Adrenal gland (tissue), 19 donors: ENCODE measurements at regions of chr9 and their contacts with region 1.

Region 1: DNA sequence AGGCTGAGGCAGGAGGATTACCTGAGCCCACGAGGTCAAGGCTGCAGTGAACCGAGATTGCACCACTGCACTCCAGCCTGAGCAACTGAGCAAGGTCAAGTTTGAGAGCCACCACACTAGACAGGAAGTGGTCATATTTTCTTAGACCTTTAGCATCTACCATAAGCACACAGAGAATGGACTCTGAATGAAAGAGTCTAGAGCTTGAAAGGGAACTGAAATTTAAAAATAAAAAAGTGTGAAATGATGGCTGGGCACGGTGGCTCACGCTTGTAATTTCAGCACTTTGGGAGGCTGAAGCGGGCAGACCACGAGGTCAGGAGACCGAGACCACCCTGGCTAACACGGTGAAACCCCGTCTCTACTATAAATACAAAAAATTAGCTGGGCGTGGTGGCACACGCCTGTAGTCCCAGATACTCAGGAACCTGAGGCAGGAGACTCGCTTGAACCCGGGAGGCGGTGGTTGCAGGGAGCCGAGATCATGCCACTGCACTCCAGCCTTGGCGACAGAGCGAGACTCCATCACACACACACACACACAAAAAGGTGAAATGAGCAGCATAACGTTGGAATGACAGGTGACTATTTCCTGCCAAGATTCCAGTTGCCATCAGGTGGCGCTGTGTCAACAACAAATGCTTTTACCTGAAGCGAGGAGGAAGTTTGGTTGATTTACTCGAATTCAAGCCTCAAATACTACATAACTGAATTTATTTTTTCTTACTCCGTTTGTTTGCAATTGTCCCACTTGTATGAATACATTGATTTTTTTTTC is 21.3 kb upstream of the AK3 start:
- DNase-seq: peak; percentile 63 to 94 (median 80)
- H3K4me3 ChIP-seq: peak overlapping the region in 1 of 4 donors; percentile 33
- H3K27ac ChIP-seq: peak overlapping the region in 1 of 5 donors; percentile 54
- H3K4me1 ChIP-seq: peaks cover 0 to 14% of the 10 kb centered on the region in 2 donors
- H3K27me3 ChIP-seq: no peaks in the 10 kb centered on the region
- CTCF ChIP-seq: peak; percentile 72 to 94 (median 82)
- POLR2A ChIP-seq: no peak

Region 2: GRCh38 chr9:4923580-4924544 is 161.6 kb after region 1 on chr9:
- intact Hi-C with region 1: loop called in 1 of 2 experiments (anchors 5 kb)
- DNase-seq: no peak
- H3K4me3 ChIP-seq: no peak overlapping the region
- H3K27ac ChIP-seq: no peak overlapping the region
- H3K4me1 ChIP-seq: no peaks in the 10 kb centered on the region
- H3K27me3 ChIP-seq: no peaks in the 10 kb centered on the region
- CTCF ChIP-seq: peak in 5 of 6 experiments; percentile 20 to 50 (median 39)
- POLR2A ChIP-seq: no peak

Region 3: DNA sequence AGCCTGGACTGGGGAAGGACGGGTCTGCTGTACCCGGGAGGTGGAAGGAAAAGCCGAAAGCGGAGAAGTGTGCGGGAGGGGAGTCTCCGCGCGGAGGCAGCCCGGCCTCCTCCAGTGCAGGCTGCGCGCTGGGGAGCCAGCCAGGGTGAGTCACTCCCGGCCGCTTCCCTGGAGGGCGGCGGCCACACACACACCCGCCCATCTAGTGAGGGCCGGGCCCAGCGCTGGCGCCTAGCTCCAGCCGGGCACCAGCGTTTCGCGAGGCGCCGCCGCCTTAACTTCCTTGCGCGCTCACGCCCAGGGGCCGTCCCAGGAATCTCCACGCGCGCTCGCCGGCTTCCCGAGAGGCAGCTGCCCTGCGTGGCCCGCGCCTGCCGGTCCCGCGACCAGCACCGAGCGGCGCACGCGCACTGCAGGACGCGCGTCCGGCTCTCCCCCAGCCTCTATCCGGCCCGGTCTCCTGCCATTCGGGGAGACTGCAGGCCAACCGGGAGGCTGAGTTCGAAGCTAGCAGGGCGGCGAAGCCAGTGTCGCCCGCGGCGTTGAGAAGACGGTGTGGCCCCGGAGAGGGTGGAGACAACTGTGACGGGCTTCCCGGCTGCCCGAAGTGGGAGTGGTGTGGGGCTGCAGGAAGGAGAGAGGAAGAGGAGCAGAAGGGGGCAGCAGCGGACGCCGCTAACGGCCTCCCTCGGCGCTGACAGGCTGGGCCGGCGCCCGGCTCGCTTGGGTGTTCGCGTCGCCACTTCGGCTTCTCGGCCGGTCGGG is 222.5 kb after region 1 on chr9 and contains the start of gene JAK2:
- intact Hi-C with region 1: loop called (anchors 5 to 10 kb)
- DNase-seq: peak; percentile 88 to 96 (median 92)
- H3K4me3 ChIP-seq: peak within 1 kb of the TSS in 3 of 4 donors; percentile 43 to 87 (median 74)
- H3K27ac ChIP-seq: peak within 1 kb of the TSS; percentile 88 to 98 (median 97)
- H3K4me1 ChIP-seq: peaks cover 21 to 43% of the 10 kb centered on the region in 2 donors
- H3K27me3 ChIP-seq: no peaks in the 10 kb centered on the region
- CTCF ChIP-seq: peak in 4 of 6 experiments; percentile 20 to 37 (median 28)
- POLR2A ChIP-seq: peak; percentile 60 to 95
- total RNA-seq, gene JAK2: 6.9 to 21.0 (median 13.5) TPM

Region 4: DNA sequence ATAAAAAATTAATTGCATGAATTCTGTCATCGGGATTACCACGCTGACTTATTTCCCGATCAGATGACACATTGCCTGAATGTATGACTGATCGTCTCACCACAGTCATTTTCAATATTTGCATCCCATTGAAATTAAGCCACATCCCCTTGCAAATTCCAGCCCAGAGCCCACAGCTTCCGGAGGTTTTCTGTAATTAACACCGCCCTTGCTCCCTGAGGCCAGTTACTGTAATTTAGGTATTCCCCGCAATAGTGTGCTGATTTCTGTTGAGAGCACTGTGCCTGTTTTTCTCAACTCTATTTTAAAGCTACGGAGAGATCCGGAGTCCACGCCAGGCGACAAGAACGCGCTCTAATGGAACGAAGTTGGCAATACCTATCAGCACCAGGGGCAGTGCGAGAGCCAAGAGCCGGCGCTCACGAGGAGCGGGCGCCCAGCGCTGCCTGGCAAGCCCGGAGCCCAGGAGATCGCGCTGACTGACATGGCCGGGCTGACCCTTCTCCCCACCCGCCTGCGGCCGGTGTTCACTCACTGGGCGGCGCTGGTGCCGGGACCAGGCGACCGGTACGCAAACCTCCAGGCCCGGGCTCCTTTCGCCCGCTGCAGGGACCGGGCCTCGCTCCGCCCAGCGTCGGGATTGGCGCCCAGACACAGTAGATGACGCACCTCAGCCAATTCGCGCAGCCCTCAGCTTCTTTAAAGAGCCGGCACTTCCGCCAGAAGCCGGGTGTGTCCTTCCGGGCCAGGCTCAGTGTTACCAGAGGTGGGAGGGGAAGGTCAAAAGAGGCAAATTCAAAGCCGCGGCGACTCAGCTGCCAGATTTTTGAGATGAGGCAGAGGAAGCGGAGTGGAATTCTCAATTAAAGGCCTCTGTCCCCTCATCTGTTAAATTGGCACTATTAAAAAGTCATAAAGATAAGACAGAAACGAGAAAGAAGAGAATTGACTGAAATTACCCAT is 675.2 kb after region 1 on chr9 and contains the start of gene PLGRKT:
- intact Hi-C with region 1: loop called (anchors 10 kb)
- DNase-seq: peak; percentile 94 to 98 (median 97)
- H3K4me3 ChIP-seq: peak within 1 kb of the TSS; percentile 49 to 98 (median 63)
- H3K27ac ChIP-seq: peak within 1 kb of the TSS; percentile 73 to 96 (median 90)
- H3K4me1 ChIP-seq: peaks cover 6 to 15% of the 10 kb centered on the region in 2 donors
- H3K27me3 ChIP-seq: no peaks in the 10 kb centered on the region
- CTCF ChIP-seq: peak in 5 of 6 experiments; percentile 17 to 31 (median 27)
- POLR2A ChIP-seq: peak; percentile 77 to 88
- total RNA-seq, gene PLGRKT: 15.8 to 32.0 (median 22.0) TPM

Region 5: DNA sequence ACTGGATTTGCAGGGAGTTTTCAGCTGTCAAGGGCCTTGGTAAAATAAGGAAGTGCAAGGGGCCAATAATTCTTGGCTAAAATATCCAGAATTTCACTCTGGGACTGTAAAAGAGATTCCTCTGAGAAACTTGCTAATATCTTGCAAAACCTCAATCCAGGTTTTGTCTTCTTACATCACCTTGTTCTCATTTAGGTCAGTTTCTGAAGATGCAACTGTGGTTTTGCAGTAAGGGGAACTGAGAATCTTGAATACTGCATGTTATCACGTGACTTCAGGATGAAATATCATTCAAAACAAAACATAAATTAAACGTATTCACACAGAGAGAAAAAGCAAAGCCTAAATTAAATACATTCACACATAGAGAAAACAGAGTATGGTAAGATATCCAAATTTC is 831.6 kb after region 1 on chr9:
- intact Hi-C with region 1: loop called in 1 of 2 experiments (anchors 10 kb)
- DNase-seq: no peak
- H3K4me3 ChIP-seq: no peak overlapping the region
- H3K27ac ChIP-seq: no peak overlapping the region
- H3K4me1 ChIP-seq: no peaks in the 10 kb centered on the region
- H3K27me3 ChIP-seq: no peaks in the 10 kb centered on the region
- CTCF ChIP-seq: no peak
- POLR2A ChIP-seq: no peak